ENCODE measurements at regions of chr20 and their contacts with region 1.

Region 1: GRCh38 chr20:3888622-3889488 is at the start of gene PANK2:
- H3K4me3 Mint-ChIP-seq: peak within 1 kb of the TSS; percentile 96
- H3K27ac Mint-ChIP-seq: peak within 1 kb of the TSS; percentile 93
- H3K4me1 Mint-ChIP-seq: peaks cover 31% of the 10 kb centered on the region
- H3K27me3 Mint-ChIP-seq: no peaks in the 10 kb centered on the region

Region 2: GRCh38 chr20:3901028-3901705 is 12.3 kb after region 1 on chr20:
- intact Hi-C with region 1: loop called (anchors 2 kb)
- H3K4me3 Mint-ChIP-seq: peak overlapping the region; percentile 79
- H3K27ac Mint-ChIP-seq: peak overlapping the region; percentile 82
- H3K4me1 Mint-ChIP-seq: peaks cover 80% of the 10 kb centered on the region
- H3K27me3 Mint-ChIP-seq: no peaks in the 10 kb centered on the region

Region 3: GRCh38 chr20:4925842-4926530 is 1037.1 kb after region 1 on chr20:
- intact Hi-C with region 1: no loop called
- H3K4me3 Mint-ChIP-seq: no peak overlapping the region
- H3K27ac Mint-ChIP-seq: no peak overlapping the region
- H3K4me1 Mint-ChIP-seq: peaks cover 18% of the 10 kb centered on the region
- H3K27me3 Mint-ChIP-seq: no peaks in the 10 kb centered on the region

Measured in dendritic cell treated with granulocyte-macrophage colony-stimulating factor and Interleukin-4, amounts not matched to agents 40 ng/mL and 50 ng/mL, for 4 days (primary cell).